CD4-positive, alpha-beta T cell (primary cell): ENCODE measurements at regions of chr6 and their contacts with region 1.

Region 1: DNA sequence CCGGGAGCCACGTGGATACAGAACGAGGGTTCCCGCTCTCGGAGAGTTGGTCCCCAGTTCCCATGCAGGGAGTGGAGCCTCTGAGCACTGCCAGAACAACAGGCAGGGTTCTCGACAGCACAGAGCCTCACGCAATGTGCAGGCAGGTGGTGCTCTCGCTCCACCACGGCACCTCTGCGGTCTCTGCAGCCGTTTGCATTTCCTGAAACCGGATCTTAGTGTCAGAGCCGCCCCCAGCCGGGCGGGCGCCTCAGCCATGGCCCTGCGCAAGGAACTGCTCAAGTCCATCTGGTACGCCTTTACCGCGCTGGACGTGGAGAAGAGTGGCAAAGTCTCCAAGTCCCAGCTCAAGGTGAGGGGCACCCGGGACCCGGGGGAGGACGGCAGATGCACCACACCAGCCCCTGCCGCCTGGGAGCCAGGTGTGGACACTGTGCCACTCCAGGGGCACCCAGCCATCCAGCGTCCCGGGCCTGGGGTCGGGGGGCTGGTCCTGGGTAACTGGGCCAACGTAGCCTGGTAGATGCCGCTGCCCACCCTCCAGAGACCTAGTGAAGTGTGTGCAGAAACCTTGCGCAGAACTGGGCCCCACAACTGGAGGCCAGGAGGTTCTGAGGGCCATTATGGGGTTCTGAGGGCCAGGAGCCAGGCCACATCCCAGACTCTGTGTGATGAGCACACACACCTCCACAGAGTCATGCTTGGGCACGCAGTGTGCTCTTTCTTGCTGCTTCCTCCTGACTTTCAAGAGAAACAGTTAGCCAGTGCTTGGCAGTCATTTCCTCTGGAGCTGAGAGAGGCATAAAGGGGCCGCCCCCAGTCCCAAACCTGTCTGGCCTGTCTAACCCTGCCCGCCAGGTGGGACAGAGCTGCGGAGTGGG is at the start of gene DEF6:
- DNase-seq: peak; percentile 82 to 95 (median 88)
- ATAC-seq: peak; percentile 73
- H3K4me3 ChIP-seq: peak within 1 kb of the TSS; percentile 81
- H3K4me3 Mint-ChIP-seq: peak within 1 kb of the TSS; percentile 87
- H3K27ac ChIP-seq: peak within 1 kb of the TSS; percentile 88 to 91
- H3K27ac Mint-ChIP-seq: peak within 1 kb of the TSS; percentile 96
- H3K4me1 ChIP-seq: peaks cover 57% of the 10 kb centered on the region
- H3K4me1 Mint-ChIP-seq: peaks cover 57% of the 10 kb centered on the region
- H3K27me3 ChIP-seq: no peaks in the 10 kb centered on the region
- H3K27me3 Mint-ChIP-seq: no peaks in the 10 kb centered on the region
- CTCF ChIP-seq: peak; percentile 78
- total RNA-seq, gene DEF6: 209 to 212 TPM

Region 2: DNA sequence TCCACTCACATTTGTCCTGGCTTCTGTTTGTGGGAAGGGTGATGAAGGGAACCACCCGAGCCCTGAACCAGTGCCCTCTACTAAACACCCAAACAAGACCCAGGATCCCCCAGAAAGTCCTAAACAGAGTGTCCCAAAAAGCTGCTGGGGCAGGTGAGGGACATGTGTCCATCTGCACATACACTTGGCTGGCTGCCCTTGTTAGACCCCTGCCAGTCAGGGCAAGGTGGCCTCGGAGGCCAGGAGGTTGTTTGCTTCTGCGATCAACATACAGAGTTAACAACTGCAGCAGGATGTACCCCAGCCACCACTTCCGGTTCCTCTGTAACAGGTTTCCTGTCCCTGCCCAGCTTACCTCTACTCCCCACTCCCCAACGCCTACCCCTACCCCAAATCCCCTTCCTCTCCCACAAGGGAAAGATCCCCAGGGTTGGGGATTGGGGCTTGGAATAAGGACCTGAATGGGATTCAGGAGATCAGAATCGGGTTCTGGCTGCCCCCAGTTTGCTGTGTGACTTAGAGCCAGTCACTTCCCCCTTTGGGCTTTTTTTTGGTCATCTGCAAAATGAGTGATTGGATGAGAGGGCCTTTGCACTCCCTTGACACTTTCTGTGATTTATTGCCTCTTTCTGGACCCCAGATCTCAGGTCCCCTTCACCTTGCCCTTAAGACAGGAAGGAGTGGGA is 13.7 kb after region 1 on chr6:
- CTCF ChIA-PET with region 1: interaction called, 20 read pairs
- POLR2A ChIA-PET with region 1: interaction called, 74 read pairs
- intact Hi-C with region 1: loop called in 1 of 2 experiments (anchors 1 kb)
- DNase-seq: peak; percentile 35 to 81 (median 64)
- ATAC-seq: peak; percentile 84
- H3K4me3 ChIP-seq: peak overlapping the region; percentile 46
- H3K4me3 Mint-ChIP-seq: peak overlapping the region; percentile 84
- H3K27ac ChIP-seq: peak overlapping the region; percentile 95
- H3K27ac Mint-ChIP-seq: peak overlapping the region; percentile 99
- H3K4me1 ChIP-seq: peaks cover 67% of the 10 kb centered on the region
- H3K4me1 Mint-ChIP-seq: peaks cover 97% of the 10 kb centered on the region
- H3K27me3 ChIP-seq: no peaks in the 10 kb centered on the region
- H3K27me3 Mint-ChIP-seq: no peaks in the 10 kb centered on the region
- CTCF ChIP-seq: no peak

Region 3: GRCh38 chr6:35327349-35328027 is 29.6 kb after region 1 on chr6:
- CTCF ChIA-PET with region 1: interaction called, 47 read pairs
- POLR2A ChIA-PET with region 1: interaction called, 94 read pairs
- intact Hi-C with region 1: loop called (anchors 1 kb)
- DNase-seq: peak; percentile 65 to 87 (median 75)
- ATAC-seq: peak; percentile 77
- H3K4me3 ChIP-seq: no peak overlapping the region
- H3K4me3 Mint-ChIP-seq: peak overlapping the region; percentile 28
- H3K27ac ChIP-seq: peak overlapping the region in 1 of 2 donors; percentile 30
- H3K27ac Mint-ChIP-seq: peak overlapping the region; percentile 86
- H3K4me1 ChIP-seq: peaks cover 23% of the 10 kb centered on the region
- H3K4me1 Mint-ChIP-seq: peaks cover 26% of the 10 kb centered on the region
- H3K27me3 ChIP-seq: no peaks in the 10 kb centered on the region
- H3K27me3 Mint-ChIP-seq: no peaks in the 10 kb centered on the region
- CTCF ChIP-seq: peak; percentile 78

Region 4: DNA sequence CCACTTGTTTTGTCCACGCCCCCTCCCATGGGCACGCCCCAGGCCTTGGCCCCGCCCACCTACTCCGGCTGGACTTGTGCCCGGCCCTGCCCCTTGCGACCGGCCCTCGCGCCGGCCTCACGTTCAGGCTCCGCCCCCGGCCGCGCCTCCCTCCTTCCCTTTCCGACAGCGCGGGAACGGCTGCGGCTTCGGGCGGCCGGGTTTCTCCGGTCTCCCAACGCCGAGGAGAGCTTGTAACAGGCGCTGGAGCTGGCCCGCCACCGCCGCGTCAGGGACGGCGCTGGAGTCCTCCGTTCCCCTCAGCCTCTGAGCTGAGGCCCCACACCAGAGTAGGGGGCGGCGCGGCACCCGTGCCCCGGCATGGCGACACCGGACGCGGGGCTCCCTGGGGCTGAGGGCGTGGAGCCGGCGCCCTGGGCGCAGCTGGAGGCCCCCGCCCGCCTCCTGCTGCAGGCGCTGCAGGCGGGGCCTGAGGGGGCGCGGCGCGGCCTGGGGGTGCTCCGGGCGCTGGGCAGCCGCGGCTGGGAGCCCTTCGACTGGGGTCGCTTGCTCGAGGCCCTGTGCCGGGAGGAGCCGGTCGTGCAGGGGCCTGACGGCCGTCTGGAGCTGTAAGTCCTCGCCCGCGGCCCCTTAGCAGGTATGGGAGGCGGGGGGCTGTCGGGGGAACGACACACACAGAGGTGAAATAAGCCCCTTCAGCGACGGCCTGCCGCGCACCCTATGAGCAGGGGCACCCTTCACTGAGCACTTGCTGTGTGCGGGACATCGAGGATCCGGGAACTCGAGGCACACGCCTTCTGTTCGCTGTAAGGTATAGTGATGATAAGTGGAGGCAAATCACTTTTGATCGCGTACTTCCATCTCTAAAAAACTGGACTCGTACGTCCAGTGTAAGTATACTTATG is 154.6 kb after region 1 on chr6 and contains the start of gene FANCE:
- CTCF ChIA-PET with region 1: interaction called, 75 read pairs
- POLR2A ChIA-PET with region 1: interaction called, 13 read pairs
- intact Hi-C with region 1: loop called (anchors 1 kb)
- DNase-seq: peak; percentile 67 to 95 (median 84)
- ATAC-seq: peak; percentile 75
- H3K4me3 ChIP-seq: peak within 1 kb of the TSS; percentile 68
- H3K4me3 Mint-ChIP-seq: peak within 1 kb of the TSS; percentile 89
- H3K27ac ChIP-seq: peak within 1 kb of the TSS; percentile 27 to 55
- H3K27ac Mint-ChIP-seq: peak within 1 kb of the TSS; percentile 77
- H3K4me1 ChIP-seq: peaks cover 34% of the 10 kb centered on the region
- H3K4me1 Mint-ChIP-seq: peaks cover 43% of the 10 kb centered on the region
- H3K27me3 ChIP-seq: no peaks in the 10 kb centered on the region
- H3K27me3 Mint-ChIP-seq: no peaks in the 10 kb centered on the region
- CTCF ChIP-seq: no peak
- total RNA-seq, gene FANCE: 1.6 to 1.7 TPM

Region 5: GRCh38 chr6:35552285-35552917 is 254.6 kb after region 1 on chr6:
- CTCF ChIA-PET with region 1: interaction called, 5 read pairs
- POLR2A ChIA-PET with region 1: interaction called, 3 read pairs
- intact Hi-C with region 1: loop called (anchors 1 kb)
- DNase-seq: peak; percentile 45 to 82 (median 58)
- ATAC-seq: peak; percentile 85
- H3K4me3 ChIP-seq: no peak overlapping the region
- H3K4me3 Mint-ChIP-seq: no peak overlapping the region
- H3K27ac ChIP-seq: no peak overlapping the region
- H3K27ac Mint-ChIP-seq: no peak overlapping the region
- H3K4me1 ChIP-seq: no peaks in the 10 kb centered on the region
- H3K4me1 Mint-ChIP-seq: peaks cover 8% of the 10 kb centered on the region
- H3K27me3 ChIP-seq: no peaks in the 10 kb centered on the region
- H3K27me3 Mint-ChIP-seq: no peaks in the 10 kb centered on the region
- CTCF ChIP-seq: peak; percentile 97